Calu3 (cell line): ENCODE measurements at regions of chr3 and their contacts with region 1.

Region 1: GRCh38 chr3:43162230-43163084 is 56.6 kb upstream of the POMGNT2 start:
- DNase-seq: no peak
- H3K4me3 Mint-ChIP-seq: no peak overlapping the region
- H3K27ac Mint-ChIP-seq: no peak overlapping the region
- H3K4me1 Mint-ChIP-seq: no peaks in the 10 kb centered on the region
- H3K27me3 Mint-ChIP-seq: no peaks in the 10 kb centered on the region
- CTCF ChIP-seq: no peak

Region 2: GRCh38 chr3:43178891-43179366 is 16.5 kb after region 1 on chr3:
- CTCF ChIA-PET with region 1: interaction called, 10 read pairs
- intact Hi-C with region 1: no loop called
- DNase-seq: peak; percentile 75
- H3K4me3 Mint-ChIP-seq: no peak overlapping the region
- H3K27ac Mint-ChIP-seq: peak overlapping the region; percentile 78
- H3K4me1 Mint-ChIP-seq: peaks cover 65% of the 10 kb centered on the region
- H3K27me3 Mint-ChIP-seq: no peaks in the 10 kb centered on the region
- CTCF ChIP-seq: no peak

Region 3: DNA sequence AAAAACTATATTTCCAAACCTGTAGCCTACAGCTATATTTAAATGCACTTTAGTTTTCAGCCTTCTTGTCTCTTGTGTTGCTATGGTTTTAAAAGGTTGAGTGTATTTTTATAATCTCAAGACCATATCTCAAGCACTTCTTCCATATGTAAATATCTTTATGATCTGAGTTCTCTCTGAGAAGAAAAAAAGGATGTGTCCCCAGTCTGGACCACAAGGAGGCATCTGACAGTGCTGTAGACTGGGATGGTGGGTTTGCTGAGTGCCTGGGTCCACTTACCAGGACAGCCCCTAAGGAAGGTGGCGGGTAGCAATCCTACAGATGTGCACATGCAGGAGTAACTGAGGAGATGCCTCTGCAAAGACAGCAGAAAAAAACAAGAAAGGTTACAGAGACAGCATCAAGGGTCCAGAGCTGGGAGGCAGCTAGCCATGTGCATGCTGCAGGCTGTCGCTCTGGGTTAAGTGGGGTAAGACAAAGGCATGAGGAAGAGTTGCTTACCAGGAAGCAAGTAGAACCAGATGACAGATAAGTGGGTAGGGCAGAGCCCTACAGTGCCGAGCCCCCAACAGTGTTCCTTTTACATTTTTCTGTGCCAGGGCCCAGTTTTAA is 53.3 kb after region 1 on chr3:
- CTCF ChIA-PET with region 1: interaction called, 7 read pairs
- intact Hi-C with region 1: loop called (anchors 5 kb)
- DNase-seq: peak; percentile 33
- H3K4me3 Mint-ChIP-seq: no peak overlapping the region
- H3K27ac Mint-ChIP-seq: peak overlapping the region; percentile 92
- H3K4me1 Mint-ChIP-seq: peaks cover 55% of the 10 kb centered on the region
- H3K27me3 Mint-ChIP-seq: no peaks in the 10 kb centered on the region
- CTCF ChIP-seq: peak; percentile 25

Region 4: GRCh38 chr3:43286115-43286840 is 123.8 kb after region 1 on chr3 and contains the start of gene SNRK:
- CTCF ChIA-PET with region 1: interaction called, 4 read pairs
- intact Hi-C with region 1: loop called (anchors 5 kb)
- DNase-seq: peak; percentile 95
- H3K4me3 Mint-ChIP-seq: peak within 1 kb of the TSS; percentile 77
- H3K27ac Mint-ChIP-seq: peak within 1 kb of the TSS; percentile 89
- H3K4me1 Mint-ChIP-seq: peaks cover 30% of the 10 kb centered on the region
- H3K27me3 Mint-ChIP-seq: no peaks in the 10 kb centered on the region
- CTCF ChIP-seq: no peak
- total RNA-seq, gene SNRK: 21.0 and 21.8 TPM in 2 replicates

Region 5: DNA sequence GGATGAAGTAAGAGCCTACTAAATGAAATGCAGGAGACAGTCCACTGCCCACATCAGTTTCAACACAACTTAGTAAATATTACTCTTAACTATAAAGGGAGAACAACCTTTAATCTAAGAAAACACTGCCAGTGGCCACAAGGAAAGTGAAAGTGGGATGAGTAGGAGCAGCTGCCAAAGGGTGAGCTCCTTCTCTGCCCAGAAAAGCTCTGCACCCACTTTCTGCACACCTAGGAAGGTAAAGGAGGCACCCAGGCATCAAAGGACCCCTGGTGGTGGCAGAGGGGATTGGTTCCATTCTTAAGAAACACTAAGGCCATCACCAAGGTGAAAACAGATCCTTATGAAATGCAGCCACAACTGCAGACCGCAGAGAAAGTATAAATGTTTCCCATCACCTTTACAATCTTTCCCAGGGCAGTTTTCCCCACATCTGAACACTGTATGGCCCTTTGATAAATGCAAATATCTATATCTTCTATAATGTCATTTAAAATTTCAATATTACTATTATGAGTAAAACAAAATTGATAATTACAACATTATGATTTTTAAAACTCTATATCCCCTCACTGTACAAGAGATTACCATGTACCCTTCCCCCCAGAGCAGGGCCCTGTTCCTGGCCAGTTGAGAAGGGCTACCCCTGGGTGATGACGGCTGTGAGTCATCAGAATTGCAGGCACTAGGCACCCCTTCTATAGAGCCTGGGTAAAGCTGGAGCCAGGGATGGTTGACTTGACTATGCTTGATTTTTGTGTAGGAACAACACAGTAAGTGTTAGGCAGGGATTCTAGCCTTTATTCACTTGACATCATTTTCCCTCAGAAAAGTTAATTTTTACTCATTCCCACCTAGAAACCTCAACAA is 215.8 kb after region 1 on chr3:
- CTCF ChIA-PET with region 1: interaction called, 11 read pairs
- intact Hi-C with region 1: loop called (anchors 1 kb)
- DNase-seq: peak; percentile 67
- H3K4me3 Mint-ChIP-seq: no peak overlapping the region
- H3K27ac Mint-ChIP-seq: no peak overlapping the region
- H3K4me1 Mint-ChIP-seq: no peaks in the 10 kb centered on the region
- H3K27me3 Mint-ChIP-seq: no peaks in the 10 kb centered on the region
- CTCF ChIP-seq: peak; percentile 51

Region 6: GRCh38 chr3:43503067-43503728 is 340.7 kb after region 1 on chr3:
- CTCF ChIA-PET with region 1: interaction called, 10 read pairs
- intact Hi-C with region 1: loop called (anchors 2 kb)
- DNase-seq: no peak
- H3K4me3 Mint-ChIP-seq: no peak overlapping the region
- H3K27ac Mint-ChIP-seq: no peak overlapping the region
- H3K4me1 Mint-ChIP-seq: no peaks in the 10 kb centered on the region
- H3K27me3 Mint-ChIP-seq: no peaks in the 10 kb centered on the region
- CTCF ChIP-seq: no peak

Region 7: DNA sequence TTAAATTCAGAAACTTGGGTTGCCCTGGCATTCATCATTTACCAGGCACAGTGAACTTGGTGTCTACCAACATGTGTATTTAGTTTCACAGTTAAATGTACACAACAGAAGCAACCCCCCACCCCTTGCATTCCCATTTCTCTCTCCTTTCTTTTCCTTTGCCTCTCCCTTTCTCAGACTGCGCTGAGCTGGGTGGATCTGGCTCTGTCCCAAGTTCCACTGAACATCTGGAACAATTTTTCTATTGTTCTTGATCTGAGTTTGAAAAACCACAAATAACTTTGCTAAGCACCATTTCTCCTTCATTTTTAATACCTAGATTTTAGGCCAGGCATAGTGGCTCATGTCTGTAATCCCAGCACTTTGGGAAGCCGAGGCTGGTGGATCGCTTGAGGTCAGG is 770.5 kb after region 1 on chr3:
- CTCF ChIA-PET with region 1: no interaction called
- intact Hi-C with region 1: no loop called
- DNase-seq: no peak
- H3K4me3 Mint-ChIP-seq: no peak overlapping the region
- H3K27ac Mint-ChIP-seq: no peak overlapping the region
- H3K4me1 Mint-ChIP-seq: no peaks in the 10 kb centered on the region
- H3K27me3 Mint-ChIP-seq: peaks cover 90% of the 10 kb centered on the region
- CTCF ChIP-seq: no peak